GM23248 (cell line): ENCODE measurements at regions of chr18 and their contacts with region 1.

Region 1: DNA sequence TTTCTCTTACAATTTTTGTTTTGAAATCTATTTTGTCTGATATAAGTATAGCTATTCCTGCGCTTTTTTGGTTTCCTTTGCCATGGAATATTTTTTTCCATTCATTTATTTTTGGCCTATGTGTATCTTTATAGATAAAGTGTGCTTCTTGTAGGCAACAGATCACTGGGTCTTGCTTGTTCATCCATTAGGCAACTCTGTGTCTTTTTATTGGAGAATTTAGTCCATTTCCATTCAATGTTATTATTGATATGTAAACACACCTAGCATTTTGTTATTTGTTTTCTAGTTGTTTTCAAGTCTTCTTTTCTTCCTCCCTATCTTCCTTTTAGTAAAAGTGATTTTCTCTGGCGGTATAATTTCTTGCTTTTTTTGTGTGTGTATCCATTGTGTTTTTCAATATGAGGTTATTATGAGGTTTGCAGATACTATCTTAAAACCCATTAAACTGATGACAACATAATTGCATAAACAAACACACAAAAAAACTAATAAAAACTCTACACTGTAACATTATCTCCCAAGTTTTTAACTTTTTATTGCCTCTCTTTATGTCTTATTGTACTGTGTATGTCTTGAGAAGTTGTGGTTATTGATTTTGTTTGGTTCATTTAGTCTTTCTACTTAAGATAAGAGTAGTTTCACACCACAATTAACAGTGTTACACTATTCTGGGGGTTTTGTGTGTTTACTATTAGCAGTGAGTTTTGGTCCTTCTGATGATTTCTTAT is 71.6 kb downstream of the ANKRD62 start:
- DNase-seq: no peak
- H3K4me3 ChIP-seq: no peak overlapping the region
- H3K27ac ChIP-seq: no peak overlapping the region
- H3K4me1 ChIP-seq: no peaks in the 10 kb centered on the region
- H3K27me3 ChIP-seq: no peaks in the 10 kb centered on the region

Region 2: DNA sequence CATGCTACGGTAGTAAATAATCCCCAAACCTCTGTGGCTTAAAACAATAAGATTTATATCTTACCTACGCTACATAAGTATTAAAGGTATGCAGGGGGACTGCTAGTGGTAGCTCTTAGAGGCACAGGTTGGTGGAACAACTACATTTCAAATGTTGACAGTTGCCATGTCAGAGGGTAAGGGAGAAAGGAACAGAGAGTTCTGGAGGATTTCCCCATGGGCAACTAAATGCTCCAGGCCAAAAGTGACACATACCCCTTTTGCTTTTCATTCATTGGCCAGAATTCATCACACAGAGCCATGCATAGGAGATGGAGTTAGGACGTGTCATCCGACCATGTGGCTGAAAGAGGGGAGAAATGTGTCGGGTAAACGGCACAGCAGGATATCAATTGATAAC is 1506.2 kb before region 1 on chr18:
- in situ Hi-C with region 1: loop called (anchors 5 kb)
- DNase-seq: no peak
- H3K4me3 ChIP-seq: no peak overlapping the region
- H3K27ac ChIP-seq: no peak overlapping the region
- H3K4me1 ChIP-seq: no peaks in the 10 kb centered on the region
- H3K27me3 ChIP-seq: no peaks in the 10 kb centered on the region